ENCODE measurements at regions of chr19 and their contacts with region 1.

Region 1: DNA sequence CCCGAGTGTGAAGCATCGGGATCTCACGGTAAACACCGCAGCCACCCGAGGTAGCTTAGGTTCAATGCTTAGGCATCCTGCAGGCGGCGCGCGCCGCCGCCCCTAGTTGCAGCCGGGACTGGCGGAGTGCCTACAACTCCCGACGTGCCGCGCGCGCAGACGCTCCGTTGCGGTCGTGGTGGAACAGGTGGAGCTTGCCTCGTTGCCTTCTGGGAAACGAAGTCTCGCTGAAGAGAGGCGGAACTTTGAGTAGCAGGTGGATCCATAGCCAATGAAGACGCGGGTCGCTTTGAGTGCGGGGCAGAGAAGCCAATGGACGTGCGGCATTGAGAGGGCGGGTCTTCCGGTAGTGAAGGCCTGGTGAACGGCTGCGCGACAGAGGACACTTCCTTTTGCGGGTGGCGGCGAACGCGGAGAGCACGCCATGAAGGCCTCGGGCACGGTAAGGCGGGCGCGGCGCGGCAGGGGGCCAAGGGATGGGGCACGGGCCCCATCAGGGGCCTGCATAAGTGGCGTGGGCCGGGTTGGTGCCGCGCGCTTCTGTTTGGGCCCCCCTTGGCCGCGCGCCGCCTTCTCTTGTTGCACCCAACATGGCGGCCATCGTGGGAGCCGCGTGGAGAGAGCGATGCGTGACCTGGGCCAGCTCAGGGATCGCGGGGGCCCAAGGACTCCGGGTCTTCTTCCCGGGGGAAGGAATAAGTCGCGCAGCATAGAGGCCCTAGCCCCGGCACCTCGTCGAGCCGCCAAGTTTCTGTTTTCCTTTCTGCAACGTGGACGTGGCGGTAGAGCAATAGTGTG is at the start of gene RPL18A:
- DNase-seq: peak; percentile 98 to 99
- ATAC-seq: peak; percentile 90 to 94 (median 92)
- H3K4me3 ChIP-seq: peak within 1 kb of the TSS; percentile 98
- H3K27ac ChIP-seq: peak within 1 kb of the TSS; percentile 99
- H3K4me1 ChIP-seq: peaks cover 29% of the 10 kb centered on the region
- H3K27me3 ChIP-seq: no peaks in the 10 kb centered on the region
- CTCF ChIP-seq: peak; percentile 71
- total RNA-seq, gene RPL18A: 1,164 to 1,735 (median 1,510) TPM

Region 2: DNA sequence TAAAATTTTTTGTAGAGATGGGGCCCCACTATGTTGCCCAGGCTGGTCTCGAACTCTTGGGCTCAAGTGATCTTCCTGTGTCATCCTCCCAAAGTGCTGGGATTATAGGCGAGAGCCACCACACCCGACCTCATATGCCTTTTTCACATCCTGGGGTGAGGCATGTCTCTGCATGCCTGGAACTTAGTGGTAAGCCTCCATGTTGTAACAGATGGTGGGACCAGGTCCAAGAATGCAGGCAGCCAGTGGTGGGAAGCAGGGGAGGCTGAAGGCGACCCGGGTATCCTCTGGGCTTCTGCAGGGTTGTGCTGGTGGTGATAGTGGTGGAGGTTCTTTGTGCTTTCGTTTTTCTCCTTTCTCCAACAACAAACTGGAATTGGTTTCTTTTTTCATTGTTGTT is 43.0 kb after region 1 on chr19:
- intact Hi-C with region 1: no loop called
- DNase-seq: no peak
- ATAC-seq: no peak
- H3K4me3 ChIP-seq: no peak overlapping the region
- H3K27ac ChIP-seq: no peak overlapping the region
- H3K4me1 ChIP-seq: no peaks in the 10 kb centered on the region
- H3K27me3 ChIP-seq: peaks cover 0 to 20% (median 0%) of the 10 kb centered on the region in 3 donors
- CTCF ChIP-seq: no peak

Region 3: GRCh38 chr19:17932485-17933338 is 73.0 kb after region 1 on chr19 and contains the start of gene CCDC124:
- intact Hi-C with region 1: loop called (anchors 1 to 2 kb)
- DNase-seq: peak; percentile 93 to 95
- ATAC-seq: peak; percentile 97 to 98 (median 97)
- H3K4me3 ChIP-seq: peak within 1 kb of the TSS; percentile 81
- H3K27ac ChIP-seq: peak within 1 kb of the TSS; percentile 88
- H3K4me1 ChIP-seq: peaks cover 12% of the 10 kb centered on the region
- H3K27me3 ChIP-seq: no peaks in the 10 kb centered on the region
- CTCF ChIP-seq: peak; percentile 86
- total RNA-seq, gene CCDC124: 92.1 to 122 (median 99.6) TPM

Region 4: DNA sequence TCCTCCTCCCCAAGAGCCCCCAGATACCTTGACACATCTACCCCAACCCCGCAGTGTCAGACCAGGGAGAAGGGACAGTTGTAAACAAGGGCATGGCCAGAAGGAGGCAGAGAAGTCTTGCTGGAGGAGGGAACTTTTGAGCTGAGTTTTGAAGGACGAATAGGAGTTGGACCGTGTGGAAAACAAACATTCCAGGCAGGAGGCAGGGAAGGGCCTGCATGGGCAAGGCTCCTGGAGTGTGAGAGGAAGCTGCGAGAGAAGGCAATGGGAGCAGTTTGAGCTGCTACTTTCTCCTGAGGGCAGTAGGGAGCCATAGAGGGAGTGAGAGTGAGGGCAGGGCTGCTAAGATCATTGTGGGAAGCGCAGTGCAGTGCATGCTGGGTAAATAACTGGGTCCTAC is 203.7 kb after region 1 on chr19:
- intact Hi-C with region 1: loop called in 1 of 2 experiments (anchors 10 kb)
- DNase-seq: no peak
- ATAC-seq: no peak
- H3K4me3 ChIP-seq: no peak overlapping the region
- H3K27ac ChIP-seq: no peak overlapping the region
- H3K4me1 ChIP-seq: no peaks in the 10 kb centered on the region
- H3K27me3 ChIP-seq: no peaks in the 10 kb centered on the region
- CTCF ChIP-seq: no peak

Measured in psoas muscle (tissue), 8 donors.